K562 (cell line): ENCODE measurements at regions of chr1 and their contacts with region 1.

Region 1: GRCh38 chr1:38800720-38801671 is 58.6 kb downstream of the RRAGC start:
- DNase-seq: no peak
- ATAC-seq: no peak
- H3K4me3 ChIP-seq: no peak overlapping the region
- H3K27ac ChIP-seq: no peak overlapping the region
- H3K4me1 ChIP-seq: peaks cover 0 to 12% of the 10 kb centered on the region in 2 experiments; a peak in 2 of 5 replicates
- H3K27me3 ChIP-seq: no peaks in the 10 kb centered on the region; a peak in 1 of 5 replicates
- CTCF ChIP-seq: no peak
- EP300 ChIP-seq: no peak
- POLR2A ChIP-seq: no peak
- RAD21 ChIP-seq: no peak

Region 2: DNA sequence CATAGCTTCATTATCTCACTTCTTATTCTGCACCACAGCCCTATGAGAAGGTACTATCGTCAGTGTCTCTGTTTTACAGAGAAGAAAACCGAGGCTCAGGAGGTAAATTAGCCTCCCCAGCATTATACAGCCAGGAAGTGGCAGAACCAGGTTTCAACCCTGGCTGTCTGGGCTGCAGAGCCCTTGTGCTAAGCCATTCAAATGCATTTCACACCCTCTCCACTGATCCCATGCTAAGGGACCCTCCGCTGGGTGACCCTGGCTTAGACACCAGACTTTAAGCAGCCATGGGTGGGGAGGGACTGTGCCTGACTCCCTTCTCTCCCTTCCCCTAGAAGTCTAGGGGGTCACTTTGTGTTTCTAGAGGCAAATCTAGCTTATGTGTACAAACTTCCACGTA is 29.0 kb before region 1 on chr1:
- CTCF ChIA-PET with region 1: no interaction called
- POLR2A ChIA-PET with region 1: no interaction called
- in situ Hi-C with region 1: no loop called
- intact Hi-C with region 1: no loop called
- DNase-seq: no peak
- ATAC-seq: peak; percentile 28
- H3K4me3 ChIP-seq: no peak overlapping the region
- H3K27ac ChIP-seq: no peak overlapping the region
- H3K4me1 ChIP-seq: peaks cover 2 to 6% of the 10 kb centered on the region in 2 experiments; a peak in 4 of 5 replicates
- H3K27me3 ChIP-seq: no peaks in the 10 kb centered on the region
- CTCF ChIP-seq: no peak
- EP300 ChIP-seq: no peak
- POLR2A ChIP-seq: no peak
- RAD21 ChIP-seq: no peak

Region 3: DNA sequence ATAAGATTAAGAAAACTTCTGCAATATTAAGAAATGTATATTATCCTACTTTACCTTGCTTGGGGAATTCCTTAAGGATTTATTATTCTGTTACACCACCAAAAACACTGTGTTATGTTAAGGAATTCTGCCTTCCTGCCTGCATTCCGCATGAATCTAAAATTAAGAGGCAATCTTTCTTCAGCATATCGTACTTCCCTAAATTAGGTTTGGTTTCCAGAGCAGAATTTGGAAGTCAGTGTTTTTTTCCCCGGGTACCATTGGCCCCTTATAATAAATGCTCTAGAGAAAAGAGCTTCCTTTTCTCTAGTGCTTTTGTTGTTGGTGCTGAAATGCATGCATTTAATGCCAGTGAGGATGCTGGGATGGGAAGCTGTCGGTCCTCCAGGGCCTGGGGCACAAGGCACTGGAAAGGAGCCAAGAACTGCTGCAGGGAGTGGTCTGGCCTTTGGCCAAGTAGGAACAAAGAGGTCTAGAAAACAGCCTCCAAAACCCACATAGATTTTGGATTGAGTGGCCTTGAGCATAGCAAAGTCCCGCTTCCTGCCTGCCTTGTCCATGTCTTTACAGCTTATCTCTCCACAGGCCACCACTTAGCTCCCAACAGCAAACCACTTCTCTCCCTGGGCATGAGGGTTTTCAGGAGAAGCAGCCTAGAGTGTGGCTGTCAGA is 11.4 kb before region 1 on chr1:
- CTCF ChIA-PET with region 1: no interaction called
- POLR2A ChIA-PET with region 1: interaction called, 12 read pairs
- in situ Hi-C with region 1: no loop called
- intact Hi-C with region 1: no loop called
- DNase-seq: peak; percentile 54 to 77 (median 64)
- ATAC-seq: peak; percentile 51
- H3K4me3 ChIP-seq: no peak overlapping the region
- H3K27ac ChIP-seq: peak overlapping the region; percentile 35; the same call in 1 of the 3 replicates
- H3K4me1 ChIP-seq: peaks cover 30 to 46% of the 10 kb centered on the region in 2 experiments
- H3K27me3 ChIP-seq: no peaks in the 10 kb centered on the region
- CTCF ChIP-seq: no peak
- EP300 ChIP-seq: no peak
- POLR2A ChIP-seq: no peak
- RAD21 ChIP-seq: no peak